ENCODE measurements at regions of chr19 and their contacts with region 1.

Region 1: GRCh38 chr19:56748378-56748777 is 76.8 kb upstream of the ZNF835 start:
- DNase-seq: no peak
- ATAC-seq: no peak
- H3K4me3 ChIP-seq: peak overlapping the region in 1 of 12 donors; percentile 10
- H3K27ac ChIP-seq: no peak overlapping the region
- H3K4me1 ChIP-seq: peaks cover 0 to 3% (median 0%) of the 10 kb centered on the region in 12 donors
- H3K27me3 ChIP-seq: peaks cover 0 to 10% (median 0%) of the 10 kb centered on the region in 9 donors
- CTCF ChIP-seq: peak; percentile 33 to 73 (median 56)
- POLR2A ChIP-seq: no peak

Region 2: GRCh38 chr19:56838909-56839651 is 90.7 kb after region 1 on chr19:
- intact Hi-C with region 1: loop called in 3 of 10 experiments (anchors 5 kb)
- DNase-seq: peak; percentile 95 to 99 (median 97)
- ATAC-seq: peak; percentile 64 to 76 (median 68)
- H3K4me3 ChIP-seq: peak overlapping the region in 11 of 12 donors; percentile 38 to 76 (median 60)
- H3K27ac ChIP-seq: peak overlapping the region in 11 of 12 donors; percentile 52 to 94 (median 87)
- H3K4me1 ChIP-seq: peaks cover 0 to 14% (median 0%) of the 10 kb centered on the region in 12 donors
- H3K27me3 ChIP-seq: peaks cover 0 to 4% (median 0%) of the 10 kb centered on the region in 9 donors
- CTCF ChIP-seq: no peak
- POLR2A ChIP-seq: no peak